Activated CD4-positive, alpha-beta T cell treated with anti-CD3 and anti-CD28 coated beads for 36 hours (primary cell): ENCODE measurements at regions of chr2 and their contacts with region 1.

Region 1: GRCh38 chr2:196182439-196183171 is 11.2 kb upstream of the STK17B start:
- DNase-seq: no peak
- ATAC-seq: peak; percentile 63
- H3K4me3 Mint-ChIP-seq: peak overlapping the region; percentile 53
- H3K27ac Mint-ChIP-seq: peak overlapping the region; percentile 95
- H3K4me1 Mint-ChIP-seq: peaks cover 74% of the 10 kb centered on the region
- H3K27me3 Mint-ChIP-seq: no peaks in the 10 kb centered on the region

Region 2: GRCh38 chr2:196195302-196195701 is 12.7 kb after region 1 on chr2:
- CTCF ChIA-PET with region 1: interaction called, 9 read pairs
- POLR2A ChIA-PET with region 1: interaction called, 3 read pairs
- intact Hi-C with region 1: loop called in 1 of 2 experiments (anchors 1 kb)
- DNase-seq: no peak
- ATAC-seq: no peak
- H3K4me3 Mint-ChIP-seq: peak overlapping the region; percentile 34
- H3K27ac Mint-ChIP-seq: peak overlapping the region; percentile 34
- H3K4me1 Mint-ChIP-seq: peaks cover 62% of the 10 kb centered on the region
- H3K27me3 Mint-ChIP-seq: no peaks in the 10 kb centered on the region

Region 3: GRCh38 chr2:196200557-196200956 is 18.0 kb after region 1 on chr2:
- CTCF ChIA-PET with region 1: interaction called, 10 read pairs
- POLR2A ChIA-PET with region 1: interaction called, 3 read pairs
- intact Hi-C with region 1: loop called in 1 of 2 experiments (anchors 1 kb)
- DNase-seq: peak; percentile 65
- ATAC-seq: peak; percentile 92
- H3K4me3 Mint-ChIP-seq: peak overlapping the region; percentile 47
- H3K27ac Mint-ChIP-seq: peak overlapping the region; percentile 90
- H3K4me1 Mint-ChIP-seq: peaks cover 49% of the 10 kb centered on the region
- H3K27me3 Mint-ChIP-seq: no peaks in the 10 kb centered on the region